PC-3 (cell line): ENCODE measurements at regions of chr4 and their contacts with region 1.

Region 1: GRCh38 chr4:126627255-126627654 is 1005.5 kb upstream of the INTU start:
- DNase-seq: peak; percentile 20
- ATAC-seq: peak; percentile 68
- H3K4me3 ChIP-seq: no peak overlapping the region
- H3K27ac ChIP-seq: no peak overlapping the region
- H3K4me1 ChIP-seq: no peaks in the 10 kb centered on the region
- H3K27me3 ChIP-seq: no peaks in the 10 kb centered on the region
- CTCF ChIP-seq: peak; percentile 57

Region 2: GRCh38 chr4:126541820-126542219 is 85.4 kb before region 1 on chr4:
- CTCF ChIA-PET with region 1: no interaction called
- POLR2A ChIA-PET with region 1: no interaction called
- intact Hi-C with region 1: no loop called
- DNase-seq: no peak
- ATAC-seq: no peak
- H3K4me3 ChIP-seq: no peak overlapping the region
- H3K27ac ChIP-seq: no peak overlapping the region
- H3K4me1 ChIP-seq: no peaks in the 10 kb centered on the region
- H3K27me3 ChIP-seq: no peaks in the 10 kb centered on the region
- CTCF ChIP-seq: no peak

Region 3: DNA sequence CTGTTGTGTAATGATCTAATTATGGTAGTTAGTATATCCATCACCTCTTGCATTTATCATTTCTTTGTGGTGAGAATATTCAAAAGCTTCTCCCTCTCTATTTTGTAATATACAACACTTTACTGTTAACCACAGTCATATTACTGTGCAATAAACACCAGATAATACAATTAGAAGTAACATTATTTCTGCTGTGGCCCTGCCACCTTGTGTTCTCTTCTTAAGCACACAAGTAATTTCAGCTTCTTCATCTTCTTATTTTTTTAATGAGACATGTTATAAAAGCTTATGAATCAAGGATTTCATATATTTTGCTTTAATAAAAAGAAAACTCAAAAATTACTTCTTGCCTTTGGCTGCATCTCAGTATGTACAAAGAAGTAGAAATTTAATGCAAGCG is 330.3 kb after region 1 on chr4:
- CTCF ChIA-PET with region 1: no interaction called
- POLR2A ChIA-PET with region 1: no interaction called
- intact Hi-C with region 1: loop called (anchors 1 kb)
- DNase-seq: no peak
- ATAC-seq: no peak
- H3K4me3 ChIP-seq: no peak overlapping the region
- H3K27ac ChIP-seq: no peak overlapping the region
- H3K4me1 ChIP-seq: no peaks in the 10 kb centered on the region
- H3K27me3 ChIP-seq: no peaks in the 10 kb centered on the region
- CTCF ChIP-seq: no peak; the same call in 1 of the 2 replicates

Region 4: DNA sequence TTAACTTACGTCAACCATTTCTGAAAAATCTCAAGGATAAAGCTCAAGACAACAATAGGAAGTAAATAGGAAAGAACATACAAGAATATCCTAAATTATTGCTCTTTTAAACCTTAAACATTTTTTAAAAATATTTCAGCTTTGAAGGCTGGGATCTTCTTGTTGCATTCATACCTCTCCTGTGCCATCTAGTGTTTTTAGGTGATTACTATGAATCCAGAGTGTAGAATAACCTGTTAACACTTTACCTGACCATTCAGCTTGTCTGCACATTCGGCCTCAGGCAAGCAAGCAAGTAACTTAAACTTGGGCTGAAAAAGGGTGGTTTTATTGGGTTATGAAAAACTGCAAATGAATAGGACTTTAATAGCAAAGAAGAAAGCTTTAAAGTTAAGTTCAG is 497.7 kb after region 1 on chr4:
- CTCF ChIA-PET with region 1: no interaction called
- POLR2A ChIA-PET with region 1: no interaction called
- intact Hi-C with region 1: loop called (anchors 2 kb)
- DNase-seq: peak; percentile 6
- ATAC-seq: 0 out of 2 replicates have a peak, but pooled peaks have one; percentile 22
- H3K4me3 ChIP-seq: no peak overlapping the region
- H3K27ac ChIP-seq: no peak overlapping the region
- H3K4me1 ChIP-seq: no peaks in the 10 kb centered on the region
- H3K27me3 ChIP-seq: no peaks in the 10 kb centered on the region
- CTCF ChIP-seq: no peak; the same call in 1 of the 2 replicates

Region 5: DNA sequence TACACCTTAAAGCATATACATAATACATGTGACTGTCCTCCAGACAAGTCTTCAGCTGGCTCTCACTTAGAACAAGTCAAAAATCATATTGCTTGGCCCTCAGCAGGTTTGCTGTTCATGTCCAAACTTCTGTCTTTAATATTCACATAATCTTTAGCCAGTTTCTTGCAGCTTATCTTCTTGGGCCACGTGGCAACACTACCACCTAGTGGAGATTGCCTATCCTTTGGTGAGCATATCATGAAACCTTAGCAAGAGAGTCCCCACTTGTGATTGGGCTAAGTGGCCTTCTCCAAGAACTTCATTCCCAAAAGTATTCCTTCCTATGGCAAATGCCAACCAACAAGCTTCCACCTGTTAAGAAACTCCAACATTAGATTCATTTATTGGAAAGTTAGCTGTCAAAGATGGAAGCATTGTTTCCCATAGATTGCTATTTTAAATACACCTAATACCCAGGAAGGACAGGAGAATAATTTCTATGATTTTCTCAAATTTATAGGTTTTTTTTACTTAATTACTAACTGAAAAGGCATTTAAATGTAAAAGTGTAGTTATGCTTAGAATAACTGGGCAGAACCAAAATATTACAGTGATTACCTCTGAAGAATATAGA is 773.6 kb after region 1 on chr4:
- CTCF ChIA-PET with region 1: no interaction called
- POLR2A ChIA-PET with region 1: no interaction called
- intact Hi-C with region 1: loop called (anchors 10 kb)
- DNase-seq: peak; percentile 68
- ATAC-seq: peak; percentile 58; the same call in 1 of the 2 replicates
- H3K4me3 ChIP-seq: no peak overlapping the region
- H3K27ac ChIP-seq: no peak overlapping the region
- H3K4me1 ChIP-seq: no peaks in the 10 kb centered on the region
- H3K27me3 ChIP-seq: no peaks in the 10 kb centered on the region
- CTCF ChIP-seq: peak; percentile 75

Region 6: DNA sequence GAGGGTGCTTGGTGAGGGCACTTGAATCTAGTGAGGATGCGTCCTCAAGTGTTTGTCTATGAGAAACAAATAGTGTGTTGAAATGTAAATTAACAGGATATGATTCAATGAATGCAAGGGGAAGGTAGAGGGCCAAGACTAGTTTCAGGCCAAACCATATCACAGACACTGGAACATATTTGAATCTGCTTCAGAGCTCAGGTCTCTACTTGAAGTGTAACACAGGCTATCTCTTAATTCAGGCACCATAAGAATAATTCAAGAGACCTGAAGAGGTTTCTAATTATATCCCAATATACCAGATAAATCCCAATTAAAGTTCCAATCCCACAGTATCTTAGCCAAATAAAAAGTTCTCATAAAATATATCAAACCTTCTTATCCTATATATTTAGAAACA is 859.0 kb after region 1 on chr4:
- CTCF ChIA-PET with region 1: no interaction called
- POLR2A ChIA-PET with region 1: no interaction called
- intact Hi-C with region 1: loop called (anchors 10 kb)
- DNase-seq: no peak
- ATAC-seq: no peak
- H3K4me3 ChIP-seq: no peak overlapping the region
- H3K27ac ChIP-seq: no peak overlapping the region
- H3K4me1 ChIP-seq: no peaks in the 10 kb centered on the region
- H3K27me3 ChIP-seq: no peaks in the 10 kb centered on the region
- CTCF ChIP-seq: no peak